Right ventricle myocardium inferior (tissue), 1 donor: ENCODE measurements at regions of chr9 and their contacts with region 1.

Region 1: DNA sequence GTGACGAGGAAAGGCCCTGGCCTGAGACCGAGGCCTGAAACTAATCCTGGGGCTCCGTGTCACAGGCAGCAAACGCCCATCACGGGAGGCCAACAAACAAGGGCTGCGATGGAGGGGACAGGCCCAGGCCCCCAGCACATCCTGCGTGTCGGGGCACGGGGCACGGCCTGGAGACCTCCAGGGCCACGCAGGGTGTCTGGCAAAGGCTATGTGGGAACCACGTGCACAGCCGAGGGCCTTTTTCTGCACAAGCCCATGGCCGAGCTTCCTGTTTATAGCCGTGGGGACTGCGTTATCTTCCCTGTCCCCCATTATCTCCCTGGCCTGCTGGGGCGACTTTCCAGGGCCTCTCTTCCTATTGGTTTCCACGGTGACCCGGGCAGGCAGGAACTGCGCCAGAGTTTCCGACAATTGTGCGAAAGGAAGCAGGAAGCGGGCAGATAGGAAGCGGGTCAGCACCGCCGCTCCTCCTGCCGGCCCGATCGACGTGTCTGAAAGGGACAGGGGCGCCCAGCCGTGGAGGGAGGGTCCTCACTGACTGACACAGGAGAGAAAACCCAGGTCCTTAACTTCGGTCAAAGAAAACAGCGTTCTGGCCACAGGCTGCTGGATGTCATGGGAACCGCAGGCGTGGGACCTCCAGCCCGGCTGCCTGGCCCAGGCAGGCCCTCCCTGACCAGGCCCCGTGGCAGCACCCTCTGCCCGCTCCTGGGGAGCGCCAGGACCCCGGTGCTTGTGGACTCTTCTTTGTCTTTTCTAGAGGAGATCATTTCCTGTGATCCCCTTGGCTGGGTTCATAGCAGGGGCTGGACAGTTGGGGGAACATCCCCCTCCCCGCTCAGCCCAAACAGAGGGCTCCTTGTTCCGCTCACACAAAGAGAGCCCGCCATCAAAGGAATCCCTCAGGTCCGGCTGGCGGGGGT is 29.1 kb upstream of the SEC16A start:
- DNase-seq: peak; percentile 89
- ATAC-seq: peak; percentile 59

Region 2: GRCh38 chr9:136539427-136540421 is 27.8 kb after region 1 on chr9:
- intact Hi-C with region 1: loop called (anchors 2 kb)
- DNase-seq: peak; percentile 97
- ATAC-seq: peak; percentile 66